Activated naive CD4-positive, alpha-beta T cell treated with anti-CD3 and anti-CD28 coated beads for 36 hours (primary cell): ENCODE measurements at regions of chr17 and their contacts with region 1.

Region 1: GRCh38 chr17:40531051-40531991 is 29.9 kb upstream of the TNS4 start:
- DNase-seq: peak; percentile 95
- H3K4me3 Mint-ChIP-seq: peak overlapping the region; percentile 61
- H3K27ac Mint-ChIP-seq: peak overlapping the region; percentile 91
- H3K4me1 Mint-ChIP-seq: peaks cover 72% of the 10 kb centered on the region
- H3K27me3 Mint-ChIP-seq: no peaks in the 10 kb centered on the region

Region 2: GRCh38 chr17:40399185-40399584 is 132.1 kb before region 1 on chr17:
- CTCF ChIA-PET with region 1: interaction called, 12 read pairs
- intact Hi-C with region 1: loop called (anchors 1 kb)
- DNase-seq: no peak
- H3K4me3 Mint-ChIP-seq: no peak overlapping the region
- H3K27ac Mint-ChIP-seq: no peak overlapping the region
- H3K4me1 Mint-ChIP-seq: peaks cover 17% of the 10 kb centered on the region
- H3K27me3 Mint-ChIP-seq: no peaks in the 10 kb centered on the region

Region 3: DNA sequence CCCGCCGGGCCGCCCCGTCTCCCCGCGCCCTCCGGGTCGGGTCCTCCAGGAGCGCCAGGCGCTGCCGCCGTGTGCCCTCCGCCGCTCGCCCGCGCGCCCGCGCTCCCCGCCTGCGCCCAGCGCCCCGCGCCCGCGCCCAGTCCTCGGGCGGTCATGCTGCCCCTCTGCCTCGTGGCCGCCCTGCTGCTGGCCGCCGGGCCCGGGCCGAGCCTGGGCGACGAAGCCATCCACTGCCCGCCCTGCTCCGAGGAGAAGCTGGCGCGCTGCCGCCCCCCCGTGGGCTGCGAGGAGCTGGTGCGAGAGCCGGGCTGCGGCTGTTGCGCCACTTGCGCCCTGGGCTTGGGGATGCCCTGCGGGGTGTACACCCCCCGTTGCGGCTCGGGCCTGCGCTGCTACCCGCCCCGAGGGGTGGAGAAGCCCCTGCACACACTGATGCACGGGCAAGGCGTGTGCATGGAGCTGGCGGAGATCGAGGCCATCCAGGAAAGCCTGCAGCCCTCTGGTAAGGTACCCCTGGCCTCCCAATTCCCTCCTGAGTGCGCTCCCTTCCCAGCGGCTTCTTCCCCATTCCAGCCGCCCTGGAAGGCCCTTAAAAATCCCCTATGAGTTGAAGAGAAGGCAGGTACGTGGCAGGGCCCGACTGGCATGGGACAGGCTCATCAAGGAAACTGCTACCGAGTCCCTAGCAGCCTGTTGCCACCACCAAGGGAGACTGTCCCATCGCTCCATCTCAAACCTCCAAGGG is 87.6 kb before region 1 on chr17:
- CTCF ChIA-PET with region 1: interaction called, 47 read pairs
- intact Hi-C with region 1: loop called (anchors 1 kb)
- DNase-seq: peak; percentile 74
- H3K4me3 Mint-ChIP-seq: peak overlapping the region; percentile 78
- H3K27ac Mint-ChIP-seq: peak overlapping the region; percentile 76
- H3K4me1 Mint-ChIP-seq: peaks cover 29% of the 10 kb centered on the region
- H3K27me3 Mint-ChIP-seq: peaks cover 4% of the 10 kb centered on the region

Region 4: GRCh38 chr17:40480501-40481003 is 50.8 kb before region 1 on chr17:
- CTCF ChIA-PET with region 1: interaction called, 112 read pairs
- intact Hi-C with region 1: loop called (anchors 1 kb)
- DNase-seq: peak; percentile 95
- H3K4me3 Mint-ChIP-seq: peak overlapping the region; percentile 67
- H3K27ac Mint-ChIP-seq: peak overlapping the region; percentile 94
- H3K4me1 Mint-ChIP-seq: peaks cover 60% of the 10 kb centered on the region
- H3K27me3 Mint-ChIP-seq: no peaks in the 10 kb centered on the region

Region 5: DNA sequence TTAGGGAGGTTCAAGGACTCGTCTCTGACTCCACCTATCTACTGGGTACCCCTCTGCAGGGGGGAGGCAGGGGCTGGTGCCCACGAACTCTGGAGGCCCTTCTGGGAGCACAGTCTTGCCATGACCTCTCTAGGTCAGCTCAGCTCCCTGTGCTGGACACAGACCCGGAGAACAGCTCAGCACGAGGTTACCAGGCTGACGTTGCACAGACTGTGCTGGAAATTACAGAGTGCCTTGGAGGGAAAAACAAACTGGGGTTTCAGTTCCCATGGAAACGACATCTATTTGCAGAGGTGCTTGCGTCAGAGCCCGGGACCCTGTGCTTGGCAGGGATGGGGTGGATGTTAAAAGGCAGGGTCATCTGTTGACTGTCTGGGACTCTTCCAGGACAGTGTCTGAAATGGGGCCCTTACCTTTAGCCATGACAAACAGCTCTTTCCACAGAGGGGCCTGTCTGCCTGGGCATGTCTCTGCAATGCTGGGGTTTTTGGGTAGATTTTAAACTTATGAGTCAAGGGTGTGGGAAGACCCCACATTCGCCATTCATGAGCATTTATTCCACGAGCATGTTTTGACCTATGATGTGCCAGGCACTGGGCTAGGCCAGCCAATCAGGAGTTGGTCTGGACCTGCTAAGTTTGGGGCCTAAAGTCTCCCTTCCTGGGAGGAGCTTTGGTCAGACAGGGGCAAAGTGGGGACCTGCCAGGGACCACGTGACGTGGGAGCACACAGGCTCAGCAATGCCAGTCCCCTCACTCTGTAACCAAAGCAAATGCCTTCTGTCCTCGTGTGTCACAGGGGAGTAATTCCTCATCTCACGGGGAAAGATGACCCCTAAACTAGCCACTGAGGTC is 11.5 kb after region 1 on chr17:
- CTCF ChIA-PET with region 1: interaction called, 26 read pairs
- intact Hi-C with region 1: loop called (anchors 1 kb)
- DNase-seq: peak; percentile 89
- H3K4me3 Mint-ChIP-seq: peak overlapping the region; percentile 66
- H3K27ac Mint-ChIP-seq: peak overlapping the region; percentile 96
- H3K4me1 Mint-ChIP-seq: peaks cover 83% of the 10 kb centered on the region
- H3K27me3 Mint-ChIP-seq: no peaks in the 10 kb centered on the region

Region 6: GRCh38 chr17:40637931-40638330 is 106.6 kb after region 1 on chr17:
- CTCF ChIA-PET with region 1: no interaction called
- intact Hi-C with region 1: no loop called
- DNase-seq: no peak
- H3K4me3 Mint-ChIP-seq: no peak overlapping the region
- H3K27ac Mint-ChIP-seq: no peak overlapping the region
- H3K4me1 Mint-ChIP-seq: peaks cover 33% of the 10 kb centered on the region
- H3K27me3 Mint-ChIP-seq: no peaks in the 10 kb centered on the region